A673 (cell line): ENCODE measurements at regions of chrX and their contacts with region 1.

Region 1: DNA sequence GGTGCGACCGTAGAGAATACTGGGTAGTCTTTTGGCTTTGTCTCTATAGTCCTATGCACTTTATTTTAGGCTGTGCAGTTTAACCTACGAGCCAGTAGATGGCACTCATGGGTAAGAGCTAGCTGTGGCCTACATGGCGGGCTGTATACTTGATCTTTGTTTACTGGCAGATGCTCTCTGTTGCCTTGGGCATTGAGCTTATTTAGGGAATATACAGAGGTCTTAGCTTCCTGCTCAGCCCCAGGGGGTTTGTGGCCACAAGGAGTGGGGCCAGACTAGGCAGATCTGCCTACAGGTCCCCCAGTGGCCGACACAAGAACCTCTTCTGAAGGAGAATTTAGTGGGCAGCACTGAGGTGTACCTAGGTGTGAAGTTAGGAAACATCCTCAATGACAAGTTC is 227.6 kb upstream of the HDX start:
- DNase-seq: peak; percentile 42
- H3K4me3 ChIP-seq: no peak overlapping the region
- H3K27ac ChIP-seq: no peak overlapping the region
- H3K4me1 ChIP-seq: no peaks in the 10 kb centered on the region
- H3K27me3 ChIP-seq: no peaks in the 10 kb centered on the region
- CTCF ChIP-seq: peak; percentile 78

Region 2: DNA sequence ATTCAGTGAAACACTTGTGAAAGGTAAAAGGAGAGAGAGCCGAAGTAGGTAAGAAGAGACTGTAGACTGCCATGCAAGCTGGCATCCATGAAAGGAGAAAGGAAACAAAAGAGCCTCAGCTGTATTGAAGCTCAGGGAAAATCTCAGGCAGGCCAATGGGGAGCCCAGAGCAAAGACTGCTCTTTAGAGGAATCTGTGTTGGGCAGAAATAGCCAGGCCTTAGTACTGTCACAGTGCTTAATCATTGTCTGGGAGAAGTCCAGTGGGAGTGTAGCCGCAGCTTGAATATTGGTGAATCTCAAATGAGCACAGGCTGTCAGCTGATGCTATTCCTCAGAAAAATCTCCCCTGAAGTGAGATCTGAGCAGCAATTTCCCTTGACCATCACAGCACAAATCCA is 841.2 kb before region 1 on chrX:
- CTCF ChIA-PET with region 1: no interaction called
- POLR2A ChIA-PET with region 1: no interaction called
- intact Hi-C with region 1: no loop called
- DNase-seq: no peak
- H3K4me3 ChIP-seq: no peak overlapping the region
- H3K27ac ChIP-seq: no peak overlapping the region
- H3K4me1 ChIP-seq: no peaks in the 10 kb centered on the region
- H3K27me3 ChIP-seq: no peaks in the 10 kb centered on the region
- CTCF ChIP-seq: no peak

Region 3: DNA sequence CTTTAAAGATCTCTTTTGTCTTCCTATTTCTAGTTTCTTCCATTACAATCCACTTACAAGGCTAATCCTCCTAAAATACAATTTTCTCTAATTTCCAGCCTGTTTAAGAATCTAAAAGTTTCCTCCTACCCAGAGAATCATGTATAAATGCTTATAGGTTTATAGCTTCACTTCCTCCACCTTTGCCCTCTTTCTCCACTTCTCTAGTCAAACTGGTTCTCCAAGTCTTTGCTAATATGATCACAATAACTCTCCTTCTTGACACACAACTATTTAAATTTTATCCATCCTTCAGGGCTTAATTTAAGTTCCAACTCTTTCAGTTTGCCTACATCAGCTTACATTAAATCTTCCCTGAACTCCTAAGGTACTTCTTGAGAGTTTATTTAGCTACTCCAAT is 611.0 kb before region 1 on chrX:
- CTCF ChIA-PET with region 1: no interaction called
- POLR2A ChIA-PET with region 1: no interaction called
- intact Hi-C with region 1: no loop called
- DNase-seq: no peak
- H3K4me3 ChIP-seq: no peak overlapping the region
- H3K27ac ChIP-seq: no peak overlapping the region
- H3K4me1 ChIP-seq: no peaks in the 10 kb centered on the region
- H3K27me3 ChIP-seq: no peaks in the 10 kb centered on the region
- CTCF ChIP-seq: no peak

Region 4: GRCh38 chrX:84144281-84144680 is 585.5 kb before region 1 on chrX:
- CTCF ChIA-PET with region 1: no interaction called
- POLR2A ChIA-PET with region 1: no interaction called
- intact Hi-C with region 1: no loop called
- DNase-seq: no peak
- H3K4me3 ChIP-seq: no peak overlapping the region
- H3K27ac ChIP-seq: no peak overlapping the region
- H3K4me1 ChIP-seq: no peaks in the 10 kb centered on the region
- H3K27me3 ChIP-seq: no peaks in the 10 kb centered on the region
- CTCF ChIP-seq: no peak

Region 5: GRCh38 chrX:84907324-84907968 is 177.6 kb after region 1 on chrX:
- CTCF ChIA-PET with region 1: no interaction called
- POLR2A ChIA-PET with region 1: no interaction called
- intact Hi-C with region 1: loop called (anchors 10 kb)
- DNase-seq: no peak
- H3K4me3 ChIP-seq: no peak overlapping the region
- H3K27ac ChIP-seq: no peak overlapping the region
- H3K4me1 ChIP-seq: no peaks in the 10 kb centered on the region
- H3K27me3 ChIP-seq: no peaks in the 10 kb centered on the region
- CTCF ChIP-seq: no peak

Region 6: DNA sequence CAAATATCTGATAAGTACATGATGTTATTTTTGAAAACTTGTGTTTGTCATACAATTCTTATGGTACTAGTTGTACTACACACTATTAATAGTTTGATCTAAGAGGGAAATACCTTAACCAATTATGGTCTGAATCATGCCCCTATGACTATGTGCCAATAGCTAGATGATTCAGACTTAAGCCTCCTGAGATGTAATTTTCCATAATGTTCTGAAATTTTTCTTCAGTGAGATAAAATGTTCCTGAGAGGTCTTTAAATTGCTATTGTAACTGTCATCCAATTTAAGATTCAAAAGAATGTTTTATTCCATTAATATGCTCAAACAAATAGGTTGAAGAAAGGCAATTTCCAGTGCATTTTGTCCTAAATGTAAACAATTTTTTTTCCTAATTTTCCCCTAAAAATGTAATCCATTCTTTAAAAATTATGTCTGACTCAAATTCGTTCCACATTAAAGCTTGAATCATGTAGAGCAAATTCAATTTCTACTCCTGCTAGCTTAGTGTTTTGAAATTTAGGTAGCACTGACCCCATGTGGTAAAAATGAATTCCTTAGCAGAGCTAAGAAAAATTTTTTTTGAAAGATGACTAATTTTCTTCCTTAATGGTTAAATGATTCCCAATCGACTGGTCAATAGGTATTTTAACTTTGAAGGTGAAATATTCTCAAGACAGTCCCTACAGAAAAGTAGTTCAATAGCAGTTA is 323.0 kb after region 1 on chrX:
- CTCF ChIA-PET with region 1: interaction called, 4 read pairs
- POLR2A ChIA-PET with region 1: no interaction called
- intact Hi-C with region 1: loop called (anchors 5 kb)
- DNase-seq: peak; percentile 25
- H3K4me3 ChIP-seq: no peak overlapping the region
- H3K27ac ChIP-seq: no peak overlapping the region
- H3K4me1 ChIP-seq: no peaks in the 10 kb centered on the region
- H3K27me3 ChIP-seq: no peaks in the 10 kb centered on the region
- CTCF ChIP-seq: peak; percentile 46; the same call in 1 of the 2 replicates

Region 7: GRCh38 chrX:85544609-85545008 is 814.8 kb after region 1 on chrX:
- CTCF ChIA-PET with region 1: no interaction called
- POLR2A ChIA-PET with region 1: no interaction called
- intact Hi-C with region 1: loop called (anchors 5 kb)
- DNase-seq: peak; percentile 3
- H3K4me3 ChIP-seq: no peak overlapping the region
- H3K27ac ChIP-seq: no peak overlapping the region
- H3K4me1 ChIP-seq: no peaks in the 10 kb centered on the region
- H3K27me3 ChIP-seq: no peaks in the 10 kb centered on the region
- CTCF ChIP-seq: peak; percentile 59; the same call in 1 of the 2 replicates